ENCODE measurements at regions of chr4 and their contacts with region 1.

Region 1: GRCh38 chr4:16264798-16265197 is 38.5 kb upstream of the TAPT1 start:
- DNase-seq: no peak
- H3K4me3 ChIP-seq: no peak overlapping the region
- H3K27ac ChIP-seq: no peak overlapping the region
- H3K4me1 ChIP-seq: no peaks in the 10 kb centered on the region
- H3K27me3 ChIP-seq: no peaks in the 10 kb centered on the region
- CTCF ChIP-seq: peak; percentile 33 to 62 (median 48)
- POLR2A ChIP-seq: no peak

Region 2: GRCh38 chr4:16023776-16024408 is 240.9 kb before region 1 on chr4:
- intact Hi-C with region 1: loop called (anchors 5 kb)
- DNase-seq: no peak
- H3K4me3 ChIP-seq: no peak overlapping the region
- H3K27ac ChIP-seq: no peak overlapping the region
- H3K4me1 ChIP-seq: peaks cover 0 to 9% (median 0%) of the 10 kb centered on the region in 3 donors
- H3K27me3 ChIP-seq: peaks cover 0 to 29% (median 0%) of the 10 kb centered on the region in 4 donors
- CTCF ChIP-seq: no peak
- POLR2A ChIP-seq: no peak

Measured in esophagus squamous epithelium (tissue), 5 donors.